ENCODE measurements at regions of chr11 and their contacts with region 1.

Region 1: GRCh38 chr11:129331871-129332274 is 43.8 kb upstream of the BARX2 start:
- DNase-seq: peak; percentile 76
- H3K4me3 ChIP-seq: no peak overlapping the region
- H3K27ac ChIP-seq: no peak overlapping the region
- H3K4me1 ChIP-seq: no peaks in the 10 kb centered on the region
- H3K27me3 ChIP-seq: no peaks in the 10 kb centered on the region
- CTCF ChIP-seq: peak; percentile 91 to 92
- POLR2A ChIP-seq: no peak

Region 2: GRCh38 chr11:129209891-129210830 is 121.7 kb before region 1 on chr11:
- CTCF ChIA-PET with region 1: no interaction called
- POLR2A ChIA-PET with region 1: no interaction called
- dilution Hi-C with region 1: no loop called
- intact Hi-C with region 1: no loop called
- DNase-seq: no peak
- H3K4me3 ChIP-seq: no peak overlapping the region
- H3K27ac ChIP-seq: no peak overlapping the region
- H3K4me1 ChIP-seq: no peaks in the 10 kb centered on the region
- H3K27me3 ChIP-seq: no peaks in the 10 kb centered on the region
- CTCF ChIP-seq: no peak
- POLR2A ChIP-seq: no peak

Region 3: DNA sequence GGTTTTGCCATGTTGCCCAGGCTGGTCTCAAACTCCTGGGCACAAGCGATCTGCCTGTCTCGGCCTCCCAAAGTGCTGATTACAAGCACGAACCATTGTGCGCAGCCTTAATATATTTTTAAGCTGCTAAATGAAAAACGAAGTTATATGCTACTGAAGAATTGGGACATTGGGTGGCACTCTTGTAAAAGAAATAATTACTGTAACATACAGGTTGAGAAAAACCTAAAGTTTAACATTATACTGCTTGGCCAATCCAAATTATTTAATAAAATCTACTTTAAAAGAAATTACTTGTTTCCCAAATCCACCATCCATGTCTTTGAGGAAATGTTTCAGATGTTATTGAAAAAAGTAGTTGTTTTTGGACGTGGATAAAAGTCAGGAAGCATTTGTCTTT is 101.9 kb before region 1 on chr11:
- CTCF ChIA-PET with region 1: interaction called, 30 read pairs
- POLR2A ChIA-PET with region 1: interaction called, 4 read pairs
- dilution Hi-C with region 1: no loop called
- intact Hi-C with region 1: loop called (anchors 5 kb)
- DNase-seq: peak; percentile 12
- H3K4me3 ChIP-seq: no peak overlapping the region
- H3K27ac ChIP-seq: no peak overlapping the region
- H3K4me1 ChIP-seq: peaks cover 1% of the 10 kb centered on the region
- H3K27me3 ChIP-seq: no peaks in the 10 kb centered on the region
- CTCF ChIP-seq: no peak
- POLR2A ChIP-seq: no peak

Region 4: GRCh38 chr11:129315781-129316481 is 15.9 kb before region 1 on chr11:
- CTCF ChIA-PET with region 1: interaction called, 43 read pairs
- POLR2A ChIA-PET with region 1: no interaction called
- dilution Hi-C with region 1: no loop called
- intact Hi-C with region 1: no loop called
- DNase-seq: no peak
- H3K4me3 ChIP-seq: no peak overlapping the region
- H3K27ac ChIP-seq: no peak overlapping the region
- H3K4me1 ChIP-seq: no peaks in the 10 kb centered on the region
- H3K27me3 ChIP-seq: peaks cover 0 to 4% of the 10 kb centered on the region in 2 experiments
- CTCF ChIP-seq: no peak
- POLR2A ChIP-seq: no peak

Region 5: GRCh38 chr11:129418039-129418438 is 86.2 kb after region 1 on chr11:
- CTCF ChIA-PET with region 1: no interaction called
- POLR2A ChIA-PET with region 1: no interaction called
- dilution Hi-C with region 1: no loop called
- intact Hi-C with region 1: no loop called
- DNase-seq: no peak
- H3K4me3 ChIP-seq: no peak overlapping the region
- H3K27ac ChIP-seq: no peak overlapping the region
- H3K4me1 ChIP-seq: no peaks in the 10 kb centered on the region
- H3K27me3 ChIP-seq: no peaks in the 10 kb centered on the region
- CTCF ChIP-seq: no peak
- POLR2A ChIP-seq: no peak